ENCODE measurements at regions of chr2 and their contacts with region 1.

Region 1: DNA sequence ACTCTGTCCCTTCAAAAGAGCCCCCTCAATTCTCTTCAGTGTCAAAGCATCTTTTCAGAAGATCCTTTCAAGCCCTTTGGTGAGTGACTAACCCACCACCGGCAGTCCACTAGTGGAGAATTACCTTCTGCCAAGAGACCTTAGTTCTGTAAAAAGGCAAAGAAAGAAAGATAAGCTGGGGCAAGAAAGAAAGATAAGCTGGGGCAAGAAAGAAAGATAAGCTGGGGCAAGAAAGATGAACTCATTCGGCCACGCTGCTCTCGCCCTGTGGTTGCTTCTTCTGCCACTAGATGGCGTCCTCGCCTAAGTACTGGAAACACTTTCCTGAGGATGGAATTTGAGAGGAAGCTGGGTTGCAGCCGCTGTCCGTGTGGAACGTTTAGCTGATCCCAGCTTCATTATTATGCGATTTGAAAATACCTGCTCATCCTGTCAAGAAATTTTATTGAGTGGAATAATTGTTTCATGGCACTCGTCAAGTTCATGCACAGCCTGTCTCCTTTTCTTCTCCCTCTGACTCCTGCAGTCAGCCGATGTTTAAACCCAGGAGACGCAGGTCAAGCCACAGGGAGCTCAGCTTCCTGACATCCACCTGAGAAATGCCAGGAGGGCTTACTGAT is 17.3 kb upstream of the ANXA4 start:
- DNase-seq: no peak
- H3K4me3 ChIP-seq: peak overlapping the region; percentile 23; the same call in 1 of the 2 replicates
- H3K27me3 ChIP-seq: no peaks in the 10 kb centered on the region
- CTCF ChIP-seq: peak; percentile 87

Region 2: DNA sequence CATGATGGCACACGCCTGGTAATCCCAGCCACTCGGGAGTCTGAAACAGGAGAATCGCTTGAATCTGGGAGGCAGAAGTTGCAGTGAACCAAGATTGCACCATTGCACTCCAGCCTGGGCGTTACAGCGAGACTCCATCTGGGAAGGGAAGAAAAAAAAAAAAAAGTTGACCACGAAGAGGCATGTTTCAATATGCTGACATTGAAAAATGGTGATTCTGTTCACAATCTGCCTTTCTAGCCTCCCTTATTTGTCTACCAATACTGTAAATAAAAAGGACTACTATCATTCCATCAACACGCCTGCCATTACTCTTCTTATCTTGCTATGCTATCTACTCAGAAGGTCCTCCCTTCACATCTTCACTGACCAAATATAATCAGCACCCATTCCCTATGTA is 356.1 kb before region 1 on chr2:
- CTCF ChIA-PET with region 1: no interaction called
- POLR2A ChIA-PET with region 1: no interaction called
- DNase-seq: no peak
- H3K4me3 ChIP-seq: no peak overlapping the region
- H3K27me3 ChIP-seq: no peaks in the 10 kb centered on the region
- CTCF ChIP-seq: no peak

Region 3: GRCh38 chr2:69518841-69519240 is 205.8 kb before region 1 on chr2:
- CTCF ChIA-PET with region 1: no interaction called
- POLR2A ChIA-PET with region 1: interaction called, 29 read pairs
- DNase-seq: no peak
- H3K4me3 ChIP-seq: no peak overlapping the region
- H3K27me3 ChIP-seq: no peaks in the 10 kb centered on the region
- CTCF ChIP-seq: no peak

Region 4: DNA sequence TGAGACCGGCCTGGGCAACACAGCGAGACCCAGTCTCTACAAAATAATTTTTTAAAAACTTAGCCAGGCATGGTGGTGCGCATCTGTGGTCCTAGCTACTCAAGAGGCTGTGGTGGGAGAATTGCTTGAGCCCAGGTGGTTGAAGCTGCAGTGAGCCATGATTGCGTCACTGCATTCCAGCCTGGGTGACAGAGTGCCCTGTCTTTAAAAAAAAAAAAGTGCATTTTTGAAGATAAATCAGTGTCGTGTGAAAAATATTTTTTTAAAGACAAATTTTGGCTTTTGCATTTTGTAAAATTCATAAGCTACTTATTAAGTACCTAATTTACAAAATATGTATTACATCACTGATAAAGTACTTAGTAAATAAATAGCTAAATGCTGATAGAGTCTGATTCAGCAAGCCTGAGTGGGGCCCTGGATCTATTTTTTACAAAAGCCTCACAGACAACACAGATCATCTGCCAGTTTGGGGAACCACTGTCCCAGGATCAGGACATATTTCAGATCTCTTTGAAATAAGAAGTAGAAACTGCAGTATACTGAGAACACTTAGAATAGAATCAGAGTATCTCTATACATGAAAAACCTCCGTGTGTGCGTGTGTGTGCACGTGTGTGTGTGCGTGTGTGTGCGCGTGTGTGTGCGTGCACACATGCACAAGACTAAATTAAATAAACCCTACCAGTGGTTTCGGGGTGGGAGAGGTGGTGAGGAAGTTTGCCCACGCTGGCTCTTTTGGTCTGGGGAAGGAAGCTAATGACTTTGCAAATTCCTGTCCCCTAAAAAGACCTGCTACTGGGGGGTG is 142.7 kb before region 1 on chr2:
- CTCF ChIA-PET with region 1: no interaction called
- POLR2A ChIA-PET with region 1: no interaction called
- DNase-seq: no peak
- H3K4me3 ChIP-seq: no peak overlapping the region
- H3K27me3 ChIP-seq: no peaks in the 10 kb centered on the region
- CTCF ChIP-seq: no peak

Region 5: DNA sequence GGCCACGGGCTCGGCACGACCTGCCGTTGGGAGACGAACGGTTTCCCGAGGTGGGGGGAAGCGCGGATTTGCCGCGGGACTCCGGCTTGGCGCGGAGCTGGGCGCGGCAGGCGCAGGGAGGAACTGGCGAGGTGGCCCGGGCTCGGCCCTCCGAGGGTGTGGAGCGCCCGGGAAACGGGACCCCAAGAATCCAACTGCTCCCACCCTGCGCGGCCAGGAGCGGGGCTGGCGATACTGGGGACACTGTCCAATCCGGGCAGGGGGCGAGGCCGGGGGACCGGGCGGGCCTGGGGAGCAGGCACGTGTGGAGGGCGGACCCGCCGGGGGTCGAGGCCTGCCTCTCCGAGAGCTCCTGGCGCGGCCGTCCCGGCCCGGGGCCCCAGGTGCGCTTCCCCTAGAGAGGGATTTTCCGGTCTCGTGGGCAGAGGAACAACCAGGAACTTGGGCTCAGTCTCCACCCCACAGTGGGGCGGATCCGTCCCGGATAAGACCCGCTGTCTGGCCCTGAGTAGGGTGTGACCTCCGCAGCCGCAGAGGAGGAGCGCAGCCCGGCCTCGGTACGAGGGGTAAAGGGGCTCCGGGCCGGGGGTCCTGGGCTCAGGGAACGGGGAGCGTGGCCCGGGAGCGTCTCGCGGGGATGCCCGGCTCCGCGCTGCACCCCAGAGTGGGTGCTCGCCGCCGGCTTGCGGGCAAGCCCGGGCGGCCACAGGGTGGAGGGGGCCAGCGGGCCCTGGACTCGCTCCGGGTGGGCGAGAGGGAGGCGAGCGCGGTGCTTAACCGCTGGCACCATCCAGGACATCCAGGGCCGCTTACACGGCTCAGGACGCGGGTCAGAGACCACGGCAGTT is 17.2 kb after region 1 on chr2 and contains the start of gene ANXA4:
- CTCF ChIA-PET with region 1: interaction called, 38 read pairs
- POLR2A ChIA-PET with region 1: no interaction called
- DNase-seq: no peak
- H3K4me3 ChIP-seq: peak within 1 kb of the TSS; percentile 80
- H3K27me3 ChIP-seq: no peaks in the 10 kb centered on the region
- CTCF ChIP-seq: no peak
- polyA plus RNA-seq, gene ANXA4: 127 and 133 TPM in 2 replicates

Region 6: GRCh38 chr2:69789175-69789721 is 64.6 kb after region 1 on chr2:
- CTCF ChIA-PET with region 1: interaction called, 13 read pairs
- POLR2A ChIA-PET with region 1: no interaction called
- DNase-seq: peak; percentile 95
- H3K4me3 ChIP-seq: no peak overlapping the region
- H3K27me3 ChIP-seq: no peaks in the 10 kb centered on the region
- CTCF ChIP-seq: no peak

Region 7: GRCh38 chr2:69816923-69817542 is 92.4 kb after region 1 on chr2:
- CTCF ChIA-PET with region 1: interaction called, 257 read pairs
- POLR2A ChIA-PET with region 1: interaction called, 4 read pairs
- DNase-seq: peak; percentile 50
- H3K4me3 ChIP-seq: no peak overlapping the region
- H3K27me3 ChIP-seq: no peaks in the 10 kb centered on the region
- CTCF ChIP-seq: peak; percentile 79

Measured in BJ (cell line).